ENCODE measurements at regions of chr14 and their contacts with region 1.

Region 1: DNA sequence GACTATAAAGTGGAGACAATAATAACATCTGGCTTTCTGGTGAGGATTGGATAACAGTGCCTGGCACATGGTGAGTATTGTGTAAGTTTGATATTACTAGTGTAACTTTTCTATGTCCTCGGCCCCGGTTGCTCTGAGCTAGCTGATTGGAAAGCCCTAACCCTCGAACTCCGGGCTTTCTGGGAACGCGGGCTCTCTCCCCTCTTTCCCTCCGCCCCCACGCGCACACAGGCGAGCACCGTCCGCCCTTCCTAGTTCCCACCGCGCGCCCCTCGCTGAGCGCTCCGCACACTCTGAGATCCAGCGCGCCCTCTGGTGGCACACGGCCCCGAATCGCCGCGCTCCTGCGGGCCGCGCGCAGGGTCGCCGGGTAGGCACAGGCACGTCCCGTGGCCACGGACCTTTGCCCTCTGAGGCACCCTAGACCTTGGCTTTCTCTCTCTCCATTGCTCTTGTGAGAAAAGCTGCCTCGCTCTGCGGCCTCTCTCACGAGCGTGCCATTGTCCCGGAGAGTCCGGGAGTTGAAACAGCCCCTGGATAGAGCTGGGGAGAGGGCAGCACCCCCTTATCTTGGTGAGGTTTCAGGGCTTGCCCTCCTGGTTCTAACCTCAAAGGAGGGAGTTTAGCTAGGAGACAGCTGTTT is 23.2 kb upstream of the ESRRB start:
- DNase-seq: peak; percentile 88
- ATAC-seq: peak; percentile 90
- H3K4me3 Mint-ChIP-seq: peak overlapping the region; percentile 56
- H3K27ac Mint-ChIP-seq: no peak overlapping the region
- H3K4me1 Mint-ChIP-seq: peaks cover 30% of the 10 kb centered on the region
- H3K27me3 Mint-ChIP-seq: peaks cover 36% of the 10 kb centered on the region
- CTCF ChIP-seq: peak; percentile 64

Region 2: DNA sequence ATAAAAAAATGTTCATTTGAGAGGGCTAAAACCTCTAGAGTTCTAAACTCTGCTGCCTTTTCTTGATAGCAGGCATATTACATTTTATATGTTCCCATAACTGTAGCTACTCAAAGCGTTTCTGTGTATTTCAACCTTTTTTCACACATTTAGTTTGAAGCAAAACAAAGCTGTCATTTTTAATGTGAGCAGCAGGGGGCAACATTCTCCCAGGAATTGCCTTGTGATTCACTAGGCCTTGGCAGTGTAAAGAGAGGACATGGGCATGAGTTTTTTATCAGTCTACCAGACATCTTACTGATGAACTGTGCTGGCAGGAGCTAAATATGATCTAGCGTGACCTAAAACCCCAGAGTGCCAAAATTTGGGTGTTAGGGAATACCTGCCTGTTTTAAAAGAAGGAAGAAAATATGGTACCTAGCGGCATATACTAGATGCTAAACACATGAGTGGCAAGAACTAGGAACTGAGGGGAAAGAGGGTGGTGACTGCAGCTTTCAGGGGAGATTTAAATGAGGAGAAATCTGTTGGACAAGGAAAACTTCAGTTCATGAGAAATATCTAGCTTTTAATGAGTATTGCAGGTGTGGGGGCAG is 301.9 kb before region 1 on chr14:
- CTCF ChIA-PET with region 1: interaction called, 36 read pairs
- POLR2A ChIA-PET with region 1: no interaction called
- DNase-seq: peak; percentile 61
- ATAC-seq: peak; percentile 51
- H3K4me3 Mint-ChIP-seq: no peak overlapping the region
- H3K27ac Mint-ChIP-seq: no peak overlapping the region
- H3K4me1 Mint-ChIP-seq: peaks cover 3% of the 10 kb centered on the region
- H3K27me3 Mint-ChIP-seq: no peaks in the 10 kb centered on the region
- CTCF ChIP-seq: peak; percentile 76

Region 3: GRCh38 chr14:76115010-76115422 is 237.7 kb before region 1 on chr14:
- CTCF ChIA-PET with region 1: interaction called, 19 read pairs
- POLR2A ChIA-PET with region 1: no interaction called
- DNase-seq: no peak
- ATAC-seq: peak; percentile 64
- H3K4me3 Mint-ChIP-seq: peak overlapping the region; percentile 20; the same call in 1 of the 2 replicates
- H3K27ac Mint-ChIP-seq: peak overlapping the region; percentile 81
- H3K4me1 Mint-ChIP-seq: peaks cover 57% of the 10 kb centered on the region
- H3K27me3 Mint-ChIP-seq: no peaks in the 10 kb centered on the region
- CTCF ChIP-seq: no peak

Region 4: GRCh38 chr14:76261371-76261811 is 91.4 kb before region 1 on chr14:
- CTCF ChIA-PET with region 1: interaction called, 10 read pairs
- POLR2A ChIA-PET with region 1: no interaction called
- DNase-seq: no peak
- ATAC-seq: peak; percentile 82
- H3K4me3 Mint-ChIP-seq: peak overlapping the region; percentile 20; the same call in 1 of the 2 replicates
- H3K27ac Mint-ChIP-seq: 0 out of 2 replicates have a peak overlapping the region, but pooled peaks have one; percentile 9
- H3K4me1 Mint-ChIP-seq: peaks cover 29% of the 10 kb centered on the region
- H3K27me3 Mint-ChIP-seq: peaks cover 15% of the 10 kb centered on the region
- CTCF ChIP-seq: no peak

Region 5: GRCh38 chr14:76307786-76308780 is 44.7 kb before region 1 on chr14:
- CTCF ChIA-PET with region 1: interaction called, 16 read pairs
- POLR2A ChIA-PET with region 1: no interaction called
- DNase-seq: no peak
- ATAC-seq: no peak
- H3K4me3 Mint-ChIP-seq: no peak overlapping the region
- H3K27ac Mint-ChIP-seq: no peak overlapping the region
- H3K4me1 Mint-ChIP-seq: peaks cover 47% of the 10 kb centered on the region
- H3K27me3 Mint-ChIP-seq: peaks cover 52% of the 10 kb centered on the region
- CTCF ChIP-seq: no peak

Region 6: GRCh38 chr14:76314521-76315034 is 38.2 kb before region 1 on chr14:
- CTCF ChIA-PET with region 1: interaction called, 16 read pairs
- POLR2A ChIA-PET with region 1: no interaction called
- DNase-seq: no peak
- ATAC-seq: peak; percentile 13
- H3K4me3 Mint-ChIP-seq: peak overlapping the region; percentile 58
- H3K27ac Mint-ChIP-seq: peak overlapping the region; percentile 98
- H3K4me1 Mint-ChIP-seq: peaks cover 75% of the 10 kb centered on the region
- H3K27me3 Mint-ChIP-seq: peaks cover 45% of the 10 kb centered on the region
- CTCF ChIP-seq: no peak